ENCODE measurements at regions of chr12 and their contacts with region 1.

Region 1: GRCh38 chr12:76078748-76079147 is 5.7 kb downstream of the NAP1L1 start:
- DNase-seq: no peak
- ATAC-seq: no peak
- H3K4me3 Mint-ChIP-seq: no peak overlapping the region
- H3K27ac Mint-ChIP-seq: peak overlapping the region; percentile 48
- H3K4me1 Mint-ChIP-seq: peaks cover 66% of the 10 kb centered on the region
- H3K27me3 Mint-ChIP-seq: no peaks in the 10 kb centered on the region

Region 2: DNA sequence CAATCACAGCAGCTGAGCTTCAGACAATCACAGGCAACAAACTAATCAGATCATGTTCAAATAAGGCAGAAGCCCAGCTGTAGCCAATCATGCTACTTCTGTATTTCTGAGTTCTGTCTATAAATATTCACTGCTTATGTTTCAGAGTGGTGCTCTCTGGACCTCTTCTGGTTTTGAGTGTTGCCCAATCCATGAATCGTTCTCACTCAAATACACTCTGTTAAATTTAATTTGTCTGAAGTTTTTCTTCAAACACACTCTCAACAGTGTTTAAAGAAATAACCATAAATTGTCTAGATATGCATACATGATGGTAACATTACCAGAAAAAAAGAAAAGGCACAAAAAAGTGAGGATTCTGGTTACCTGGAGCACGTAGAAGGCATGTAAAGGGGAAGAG is 347.4 kb after region 1 on chr12:
- CTCF ChIA-PET with region 1: no interaction called
- POLR2A ChIA-PET with region 1: no interaction called
- intact Hi-C with region 1: no loop called
- DNase-seq: no peak
- ATAC-seq: no peak
- H3K4me3 Mint-ChIP-seq: no peak overlapping the region
- H3K27ac Mint-ChIP-seq: no peak overlapping the region
- H3K4me1 Mint-ChIP-seq: peaks cover 24% of the 10 kb centered on the region
- H3K27me3 Mint-ChIP-seq: no peaks in the 10 kb centered on the region

Region 3: DNA sequence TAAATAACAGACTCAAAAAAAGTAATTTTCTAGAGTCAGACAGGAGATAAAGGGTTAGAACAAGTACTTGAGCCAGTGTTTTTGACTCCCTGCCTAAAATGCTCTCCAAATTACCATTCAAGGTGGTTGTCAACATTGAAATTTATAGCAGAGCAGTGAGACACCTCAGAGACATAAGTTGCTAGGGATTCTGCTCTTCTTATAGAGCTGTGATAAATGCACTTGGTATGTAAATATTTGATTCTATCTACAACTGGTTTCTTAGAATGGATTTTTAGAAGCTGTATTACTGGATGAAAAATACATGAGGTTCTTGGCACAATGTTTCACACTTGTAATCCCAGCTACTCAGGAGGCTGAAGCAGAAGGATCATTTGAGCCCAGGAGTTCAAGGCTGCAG is 564.7 kb after region 1 on chr12:
- CTCF ChIA-PET with region 1: no interaction called
- POLR2A ChIA-PET with region 1: interaction called, 15 read pairs
- intact Hi-C with region 1: no loop called
- DNase-seq: no peak
- ATAC-seq: no peak
- H3K4me3 Mint-ChIP-seq: no peak overlapping the region
- H3K27ac Mint-ChIP-seq: no peak overlapping the region
- H3K4me1 Mint-ChIP-seq: no peaks in the 10 kb centered on the region
- H3K27me3 Mint-ChIP-seq: no peaks in the 10 kb centered on the region